AG04449 (cell line): ENCODE measurements at regions of chr16 and their contacts with region 1.

Region 1: DNA sequence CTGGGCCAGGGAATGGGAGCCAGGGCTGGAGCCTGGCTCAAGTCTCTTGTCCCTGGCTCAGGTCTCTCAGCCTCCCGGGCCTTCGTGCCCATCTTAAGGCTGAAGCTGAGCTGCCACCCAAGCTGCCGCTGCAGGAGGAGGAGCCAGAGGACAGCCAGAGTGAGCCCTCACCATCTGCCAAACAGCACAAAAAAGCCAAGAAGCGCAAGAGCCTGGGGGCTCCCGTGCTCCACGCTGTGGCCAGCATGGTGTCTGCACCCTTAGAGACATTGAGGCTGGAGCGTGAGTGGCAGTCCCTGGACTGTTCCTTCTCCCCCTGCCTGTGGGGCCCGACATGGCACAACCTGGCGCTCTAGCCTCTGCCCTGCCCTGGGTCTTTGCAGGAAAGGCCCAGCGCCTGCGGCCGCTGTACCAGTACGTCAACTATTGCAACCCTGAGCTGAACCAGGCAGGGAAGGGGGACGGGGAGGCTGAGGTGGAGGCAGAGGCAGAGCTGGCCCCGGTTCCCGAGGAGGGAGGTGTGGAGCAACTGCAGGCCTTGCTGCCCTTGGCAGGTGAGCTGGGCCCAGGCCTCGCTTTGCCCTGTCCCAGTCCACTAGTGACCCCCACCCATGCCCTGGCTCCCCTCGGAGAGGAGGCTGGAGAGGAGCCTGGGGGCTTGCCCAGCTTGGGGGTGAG is 1.3 kb downstream of the C16orf86 start:
- DNase-seq: peak; percentile 54
- H3K4me3 ChIP-seq: peak overlapping the region; percentile 23; the same call in 1 of the 2 replicates
- CTCF ChIP-seq: peak; percentile 97

Region 2: GRCh38 chr16:67546761-67547422 is 121.1 kb before region 1 on chr16:
- CTCF ChIA-PET with region 1: interaction called, 106 read pairs
- POLR2A ChIA-PET with region 1: no interaction called
- DNase-seq: no peak
- H3K4me3 ChIP-seq: no peak overlapping the region
- CTCF ChIP-seq: peak; percentile 93

Region 3: GRCh38 chr16:67555795-67556212 is 112.2 kb before region 1 on chr16:
- CTCF ChIA-PET with region 1: interaction called, 106 read pairs
- POLR2A ChIA-PET with region 1: no interaction called
- DNase-seq: no peak
- H3K4me3 ChIP-seq: no peak overlapping the region
- CTCF ChIP-seq: no peak

Region 4: GRCh38 chr16:67571981-67572431 is 96.0 kb before region 1 on chr16:
- CTCF ChIA-PET with region 1: interaction called, 13 read pairs
- POLR2A ChIA-PET with region 1: no interaction called
- DNase-seq: no peak
- H3K4me3 ChIP-seq: no peak overlapping the region
- CTCF ChIP-seq: no peak

Region 5: DNA sequence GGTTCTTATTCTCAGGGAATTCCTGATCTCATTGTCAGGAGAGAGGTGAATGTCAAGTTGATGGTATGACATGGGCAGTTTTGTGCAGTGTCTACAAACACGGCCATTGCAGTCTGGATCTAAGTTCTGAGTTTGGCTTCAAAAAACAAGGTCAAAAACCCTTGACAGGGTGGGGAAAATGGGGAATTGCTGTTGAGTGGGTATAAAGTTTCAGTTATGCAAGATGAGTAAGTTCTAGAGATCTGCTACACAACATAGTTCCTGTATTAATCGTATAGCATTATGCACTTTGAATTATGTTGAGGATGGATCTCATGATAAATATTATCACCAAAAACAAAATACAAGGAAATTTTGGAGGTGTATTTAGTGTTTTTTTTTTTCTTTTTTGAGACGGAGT is 59.6 kb before region 1 on chr16:
- CTCF ChIA-PET with region 1: no interaction called
- POLR2A ChIA-PET with region 1: no interaction called
- DNase-seq: no peak
- H3K4me3 ChIP-seq: no peak overlapping the region
- CTCF ChIP-seq: no peak

Region 6: GRCh38 chr16:67641779-67642708 is 25.9 kb before region 1 on chr16:
- CTCF ChIA-PET with region 1: interaction called, 13 read pairs
- POLR2A ChIA-PET with region 1: no interaction called
- DNase-seq: no peak
- H3K4me3 ChIP-seq: no peak overlapping the region
- CTCF ChIP-seq: no peak

Region 7: DNA sequence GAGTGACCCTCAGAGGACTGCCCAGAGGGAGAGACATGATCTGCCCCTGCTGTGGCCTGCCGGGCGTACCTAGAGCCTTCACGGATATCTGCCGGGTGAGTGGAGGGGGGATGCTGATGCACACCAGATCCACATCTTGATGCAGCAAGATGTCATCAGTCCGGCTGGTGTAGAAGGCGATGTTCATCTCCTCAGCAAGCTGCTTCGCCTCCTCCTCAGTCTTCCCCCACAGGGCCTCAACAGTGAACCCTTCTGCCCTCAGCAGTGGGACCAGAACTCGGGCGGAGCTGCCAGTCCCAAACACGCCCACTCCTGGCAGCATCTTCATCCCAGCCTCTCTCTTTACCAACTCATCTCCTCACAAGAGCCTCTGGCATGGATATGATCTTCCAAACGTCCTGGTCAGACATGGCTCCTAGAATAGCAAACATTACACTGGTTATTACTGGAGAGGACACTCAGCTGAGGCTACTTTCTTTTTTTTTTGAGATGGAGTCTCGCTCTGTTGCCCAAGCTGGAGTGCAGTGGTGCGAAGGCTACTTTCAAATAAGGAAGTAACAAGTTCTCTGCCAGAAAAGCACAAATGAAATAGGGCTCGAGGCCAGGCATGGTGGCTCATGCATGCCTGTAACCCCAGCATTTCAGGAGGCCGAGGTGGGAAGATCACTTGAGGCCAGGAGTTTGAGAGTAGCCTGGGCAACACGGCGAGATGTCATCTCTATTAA is 17.6 kb after region 1 on chr16:
- CTCF ChIA-PET with region 1: interaction called, 87 read pairs
- POLR2A ChIA-PET with region 1: no interaction called
- DNase-seq: no peak
- H3K4me3 ChIP-seq: no peak overlapping the region
- CTCF ChIP-seq: no peak

Region 8: DNA sequence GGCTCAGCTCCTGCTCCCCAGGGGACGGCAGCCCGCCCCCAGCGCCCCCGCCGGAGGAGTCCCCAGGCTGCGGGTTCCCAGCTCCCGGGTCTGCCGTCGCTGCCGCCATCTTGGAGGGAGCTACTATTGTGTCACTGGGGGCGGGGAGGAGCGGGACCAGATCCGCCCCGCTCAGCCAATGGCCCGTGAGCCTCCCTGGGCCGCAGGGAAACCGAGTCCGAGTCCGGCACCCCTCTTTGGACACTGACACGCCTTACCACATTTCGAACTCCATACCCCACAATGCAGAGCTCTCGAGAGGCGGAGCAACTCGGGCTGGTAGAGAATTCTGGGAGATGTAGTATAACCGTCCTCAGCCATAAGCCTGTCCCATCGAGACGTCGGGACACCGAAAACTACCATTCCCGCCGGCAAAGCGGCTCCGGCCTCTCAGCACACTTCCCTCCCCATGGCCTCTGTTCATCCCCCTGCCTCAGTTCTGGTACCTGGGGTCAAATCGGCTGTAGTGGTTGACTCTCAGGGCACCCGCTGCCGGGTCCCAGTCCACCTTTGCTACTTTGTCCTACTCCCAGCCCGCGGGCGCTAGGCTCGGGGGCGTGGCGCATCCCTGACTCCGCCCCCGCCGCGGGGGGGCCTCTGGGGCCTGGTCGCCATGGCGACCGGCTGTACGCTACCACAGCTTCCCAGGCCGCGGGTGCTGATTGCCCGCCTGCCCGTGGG is 138.6 kb after region 1 on chr16 and contains the starts of genes RANBP10 and TSNAXIP1:
- CTCF ChIA-PET with region 1: interaction called, 10 read pairs
- POLR2A ChIA-PET with region 1: no interaction called
- DNase-seq: peak; percentile 92
- H3K4me3 ChIP-seq: peak within 1 kb of the TSS; percentile 98
- CTCF ChIP-seq: no peak